Natural killer cell (primary cell): ENCODE measurements at regions of chr10 and their contacts with region 1.

Region 1: GRCh38 chr10:14118953-14119352 is 211.8 kb downstream of the FRMD4A start:
- DNase-seq: peak in 1 of 2 donors; percentile 9
- ATAC-seq: peak in 1 of 3 donors; percentile 28
- H3K4me3 ChIP-seq: no peak overlapping the region
- H3K4me3 Mint-ChIP-seq: no peak overlapping the region
- H3K27ac ChIP-seq: no peak overlapping the region
- H3K27ac Mint-ChIP-seq: no peak overlapping the region
- H3K4me1 ChIP-seq: no peaks in the 10 kb centered on the region
- H3K4me1 Mint-ChIP-seq: no peaks in the 10 kb centered on the region
- H3K27me3 ChIP-seq: no peaks in the 10 kb centered on the region
- H3K27me3 Mint-ChIP-seq: no peaks in the 10 kb centered on the region
- CTCF ChIP-seq: no peak

Region 2: DNA sequence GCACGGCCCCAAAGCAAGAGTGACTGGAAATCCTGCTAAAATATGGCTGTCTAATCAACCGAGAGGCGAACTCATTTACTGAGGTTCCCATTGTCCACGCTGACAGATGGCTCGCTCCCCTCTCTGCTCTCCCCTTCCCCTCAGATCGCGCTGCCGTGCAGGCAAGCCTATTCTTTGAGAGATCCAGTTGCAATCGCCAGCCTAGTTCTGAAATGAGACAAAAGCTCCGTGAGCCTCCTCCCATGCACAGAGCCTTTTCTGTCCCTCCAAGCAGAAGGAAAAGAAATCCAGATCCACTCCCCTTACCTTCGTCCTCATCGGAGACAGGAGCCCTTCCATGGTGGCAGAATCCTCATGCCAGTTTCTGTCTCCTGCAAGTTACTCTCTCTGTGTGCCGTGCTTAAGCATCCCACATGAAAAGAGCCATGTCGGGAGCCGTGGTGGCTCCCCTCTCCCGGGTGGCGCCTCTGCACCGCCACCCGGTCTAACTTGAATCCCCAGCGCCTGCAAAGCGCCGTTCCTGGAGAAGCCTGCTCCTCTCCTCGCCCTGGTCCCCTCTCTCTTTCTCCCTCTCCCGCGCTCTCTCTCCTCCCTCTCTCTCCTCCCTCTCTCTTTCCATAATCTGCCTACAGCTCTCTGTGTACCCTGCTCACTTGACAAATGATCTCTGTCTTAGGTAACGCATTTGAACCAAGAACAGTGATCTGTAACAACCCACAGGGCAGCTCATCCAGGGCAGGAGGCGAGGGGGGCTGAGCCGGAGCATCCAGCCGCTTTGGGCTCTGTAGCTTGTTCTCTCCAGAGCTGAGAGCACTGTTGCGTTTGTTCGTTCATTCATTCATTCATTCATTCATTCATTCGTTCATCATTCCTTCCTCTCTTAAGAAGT is 55.0 kb after region 1 on chr10:
- intact Hi-C with region 1: loop called (anchors 10 kb)
- DNase-seq: peak in 1 of 2 donors; percentile 32
- ATAC-seq: peak in 2 of 3 donors; percentile 29 to 39
- H3K4me3 ChIP-seq: no peak overlapping the region
- H3K4me3 Mint-ChIP-seq: peak overlapping the region; percentile 49
- H3K27ac ChIP-seq: no peak overlapping the region
- H3K27ac Mint-ChIP-seq: no peak overlapping the region
- H3K4me1 ChIP-seq: peaks cover 9% of the 10 kb centered on the region
- H3K4me1 Mint-ChIP-seq: peaks cover 16 to 18% of the 10 kb centered on the region in 2 donors
- H3K27me3 ChIP-seq: peaks cover 19% of the 10 kb centered on the region
- H3K27me3 Mint-ChIP-seq: peaks cover 43 to 84% of the 10 kb centered on the region in 2 donors
- CTCF ChIP-seq: no peak